Cardiac septum (tissue), 1 donor: ENCODE measurements at regions of chr9 and their contacts with region 1.

Region 1: GRCh38 chr9:93575796-93576257 is 557 bp upstream of the PHF2 start:
- DNase-seq: peak; percentile 84

Region 2: DNA sequence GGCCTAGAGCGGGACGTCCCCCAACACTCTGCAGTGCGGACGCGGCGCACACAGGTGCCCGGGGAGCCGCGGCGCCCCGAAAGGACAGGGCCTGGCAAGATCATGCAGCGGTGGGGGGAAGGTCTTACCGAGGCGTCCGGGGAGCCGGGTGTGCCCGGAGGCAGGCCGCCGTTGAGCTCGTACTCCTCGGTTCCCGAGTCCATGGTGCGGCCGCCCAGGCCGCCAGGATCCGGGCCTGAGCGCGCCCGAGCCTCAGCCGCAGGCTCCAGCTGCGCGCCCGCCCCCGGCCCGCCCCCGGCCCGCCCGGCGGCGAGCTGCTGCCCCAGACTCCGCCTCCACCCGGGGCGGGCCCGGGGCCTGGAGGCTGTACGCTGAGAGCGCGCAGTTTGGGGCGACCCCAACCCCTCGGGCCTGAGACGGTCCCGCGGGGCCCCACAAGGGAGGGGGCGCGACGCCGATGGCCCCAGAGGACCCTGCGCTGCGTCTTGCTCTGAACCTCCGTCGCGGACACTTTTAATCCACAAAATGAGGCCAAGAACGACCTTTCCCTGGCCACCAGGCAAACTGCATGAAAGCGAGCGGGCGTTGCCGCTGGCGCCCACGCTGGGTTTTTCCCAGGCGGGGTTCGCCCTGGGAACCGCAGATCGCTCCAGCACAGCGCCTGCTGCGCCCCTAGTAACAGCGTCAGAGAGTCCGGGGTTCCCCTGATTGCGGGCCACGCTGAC is 441.6 kb before region 1 on chr9 and contains the start of gene NINJ1:
- intact Hi-C with region 1: loop called (anchors 10 kb)
- DNase-seq: peak; percentile 89
- total RNA-seq, gene NINJ1: 46.4 TPM

Region 3: DNA sequence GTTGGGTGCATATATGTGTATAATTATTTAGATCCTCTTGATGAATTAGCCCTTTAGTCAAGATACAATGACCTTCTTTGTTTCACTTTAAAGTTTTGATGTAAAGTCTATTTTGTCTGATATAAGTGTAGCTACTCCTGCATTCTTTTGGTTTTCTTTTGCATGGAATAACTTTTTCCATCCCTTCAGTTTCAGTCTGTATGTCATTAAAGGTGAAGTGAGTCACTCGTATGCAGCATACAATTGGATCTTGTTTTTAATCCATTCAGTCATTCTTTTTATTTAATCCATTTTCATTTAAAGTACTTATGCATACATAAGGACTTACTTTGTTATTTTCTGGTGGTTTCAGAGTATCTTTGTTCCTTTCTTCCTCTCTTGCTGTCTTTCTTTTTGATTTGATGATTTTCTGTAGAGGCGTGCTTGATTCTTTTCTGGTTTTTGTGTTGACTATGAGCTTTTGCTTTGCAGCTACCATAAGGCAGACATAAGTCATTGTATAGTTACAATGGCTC is 160.6 kb before region 1 on chr9:
- intact Hi-C with region 1: no loop called
- DNase-seq: no peak